ENCODE measurements at regions of chr2 and their contacts with region 1.

Region 1: DNA sequence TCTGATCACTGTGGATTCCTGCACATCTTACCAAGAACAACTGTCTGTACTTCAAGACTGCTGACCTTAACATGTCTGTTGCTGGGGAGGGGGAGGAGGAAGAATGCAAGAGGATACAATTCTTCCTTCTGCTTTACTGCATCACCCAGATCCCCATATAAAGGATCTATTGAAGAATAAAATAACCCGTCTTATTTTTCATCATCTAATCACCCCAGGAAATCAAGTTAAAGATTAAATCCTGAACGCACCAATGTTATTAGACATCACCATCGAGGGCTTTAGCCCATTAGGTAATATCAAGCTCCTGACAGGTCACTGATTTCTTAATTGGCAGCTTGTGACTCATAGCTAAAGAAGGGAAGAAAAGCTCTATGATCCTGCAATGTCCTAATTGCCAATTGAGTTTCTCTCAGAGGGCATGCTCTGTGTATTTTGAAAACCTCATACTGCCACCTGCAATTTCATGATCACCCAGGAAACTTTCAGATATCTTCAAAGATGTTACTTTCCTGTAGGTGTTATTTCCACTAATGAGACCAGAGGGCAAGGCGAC is 75.4 kb upstream of the KCNE4 start:
- DNase-seq: no peak
- H3K4me3 ChIP-seq: no peak overlapping the region
- H3K27ac ChIP-seq: no peak overlapping the region
- H3K4me1 ChIP-seq: no peaks in the 10 kb centered on the region
- H3K27me3 ChIP-seq: no peaks in the 10 kb centered on the region
- CTCF ChIP-seq: no peak
- POLR2A ChIP-seq: no peak

Region 2: DNA sequence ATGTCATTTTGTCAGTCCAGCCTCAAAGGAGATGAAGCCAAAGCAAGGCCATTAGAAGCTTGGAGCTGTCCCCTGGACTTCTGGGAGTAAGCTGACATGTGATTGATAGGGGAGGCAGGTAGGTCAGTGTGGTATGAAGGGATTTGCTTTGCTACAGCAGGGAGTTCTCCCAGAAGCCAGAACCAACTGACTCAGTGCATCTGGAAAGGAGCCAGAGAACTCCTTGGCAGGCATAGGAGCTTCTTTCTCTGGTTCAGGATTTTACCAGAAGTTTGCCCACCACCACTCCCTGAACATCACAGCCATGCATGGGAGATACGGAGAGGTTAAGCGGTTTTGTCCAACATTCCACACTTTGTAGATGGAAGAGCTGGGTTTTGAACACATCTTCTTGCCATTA is 50.8 kb after region 1 on chr2:
- intact Hi-C with region 1: no loop called
- DNase-seq: peak in 1 of 2 donors; percentile 29
- H3K4me3 ChIP-seq: no peak overlapping the region
- H3K27ac ChIP-seq: no peak overlapping the region
- H3K4me1 ChIP-seq: no peaks in the 10 kb centered on the region
- H3K27me3 ChIP-seq: no peaks in the 10 kb centered on the region
- CTCF ChIP-seq: no peak
- POLR2A ChIP-seq: no peak

Region 3: GRCh38 chr2:223101340-223102039 is 124.9 kb after region 1 on chr2:
- intact Hi-C with region 1: loop called (anchors 10 kb)
- DNase-seq: no peak
- H3K4me3 ChIP-seq: no peak overlapping the region
- H3K27ac ChIP-seq: no peak overlapping the region
- H3K4me1 ChIP-seq: peaks cover 13% of the 10 kb centered on the region in 2 donors
- H3K27me3 ChIP-seq: no peaks in the 10 kb centered on the region
- CTCF ChIP-seq: peak in 4 of 6 experiments; percentile 14 to 51 (median 46)
- POLR2A ChIP-seq: no peak

Region 4: DNA sequence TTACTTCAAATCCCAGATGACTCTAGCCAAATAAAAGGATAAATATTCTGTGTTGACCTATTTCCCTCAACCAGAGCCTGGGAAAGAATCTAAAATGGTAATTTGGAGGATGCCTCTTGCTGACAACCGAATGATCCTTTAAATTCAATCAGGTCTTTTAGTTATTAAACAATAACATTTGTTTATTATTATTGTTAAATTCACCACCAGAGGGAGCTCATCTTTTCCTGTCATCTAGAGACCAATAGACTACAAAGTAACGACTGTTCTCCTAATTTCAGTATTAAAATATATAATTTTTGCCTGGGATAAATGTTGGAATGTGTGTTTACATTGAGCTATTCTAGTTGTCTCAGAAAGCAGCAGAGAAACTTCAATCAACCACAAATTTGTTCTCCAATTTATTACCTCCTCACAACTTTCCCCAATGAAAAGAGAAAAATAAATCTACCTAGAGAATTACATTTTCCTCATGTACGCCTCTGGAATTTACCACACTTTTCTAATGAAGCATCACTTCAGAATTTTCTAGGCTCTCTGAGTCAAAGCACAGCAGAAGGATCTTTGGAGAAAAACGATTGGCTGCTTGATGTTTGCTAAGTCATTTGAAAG is 482.8 kb after region 1 on chr2:
- intact Hi-C with region 1: loop called (anchors 5 kb)
- DNase-seq: no peak
- H3K4me3 ChIP-seq: no peak overlapping the region
- H3K27ac ChIP-seq: no peak overlapping the region
- H3K4me1 ChIP-seq: no peaks in the 10 kb centered on the region
- H3K27me3 ChIP-seq: no peaks in the 10 kb centered on the region
- CTCF ChIP-seq: peak in 3 of 6 experiments; percentile 25 to 50 (median 37)
- POLR2A ChIP-seq: no peak